ENCODE measurements at regions of chr12 and their contacts with region 1.

Region 1: DNA sequence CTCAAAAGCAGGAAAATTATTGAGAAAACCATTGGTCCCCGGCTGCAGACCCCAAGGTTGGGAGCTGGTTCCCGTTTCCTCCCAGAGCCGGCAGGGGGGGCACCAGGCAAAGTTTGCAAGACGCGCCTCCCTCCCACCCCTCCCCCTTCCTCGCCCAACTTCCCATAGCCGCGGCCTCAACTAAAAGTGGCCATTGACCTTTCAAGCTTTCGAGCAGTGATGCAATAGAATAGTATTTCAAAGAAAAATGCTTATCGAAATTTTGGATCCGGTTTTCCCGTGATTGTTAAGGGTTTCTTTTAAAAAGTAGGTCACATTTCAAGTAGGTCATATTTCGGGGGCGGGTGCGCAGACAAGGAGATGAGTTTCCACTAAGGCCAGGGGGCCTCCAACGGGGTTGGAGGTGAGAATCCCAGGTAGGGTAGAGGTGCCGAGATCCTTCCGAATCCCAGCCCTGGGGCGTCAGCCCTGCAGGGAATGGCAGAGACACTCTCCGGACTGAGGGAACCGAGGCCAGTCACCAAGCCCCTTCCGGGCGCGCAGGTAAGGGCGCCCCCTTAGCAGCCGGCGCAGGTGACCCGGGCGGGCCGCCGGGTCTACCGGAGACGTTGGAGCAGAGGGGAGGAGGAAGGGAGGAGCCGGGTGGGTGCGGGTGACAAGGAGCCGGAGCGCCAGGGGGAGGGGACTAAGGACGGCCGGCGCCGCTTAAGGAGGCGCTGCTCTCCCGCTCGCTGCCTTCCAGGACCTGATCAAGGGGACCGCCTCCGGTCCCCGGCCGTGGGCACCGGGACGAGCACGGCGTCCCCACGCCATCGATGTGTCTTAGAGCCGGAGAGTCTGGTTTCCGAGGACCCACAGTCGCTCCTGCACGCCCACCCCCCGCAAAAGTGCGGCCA is 2.6 kb upstream of the SOCS2 start:
- DNase-seq: no peak
- ATAC-seq: peak; percentile 73
- H3K4me3 ChIP-seq: peak overlapping the region; percentile 81
- H3K27ac ChIP-seq: no peak overlapping the region
- H3K4me1 ChIP-seq: peaks cover 6% of the 10 kb centered on the region; the same call in 1 of the 2 replicates
- H3K27me3 ChIP-seq: peaks cover 11 to 15% of the 10 kb centered on the region in 2 experiments
- CTCF ChIP-seq: peak; percentile 73 to 92 (median 83)
- EP300 ChIP-seq: no peak
- POLR2A ChIP-seq: no peak
- RAD21 ChIP-seq: peak; percentile 89

Region 2: GRCh38 chr12:93624595-93625294 is 54.8 kb after region 1 on chr12:
- CTCF ChIA-PET with region 1: no interaction called
- POLR2A ChIA-PET with region 1: no interaction called
- RAD21 ChIA-PET with region 1: no interaction called
- SMC1A ChIA-PET with region 1: interaction called, 3 read pairs
- in situ Hi-C with region 1: no loop called
- intact Hi-C with region 1: loop called (anchors 2 kb)
- DNase-seq: peak; percentile 63
- ATAC-seq: peak; percentile 90
- H3K4me3 ChIP-seq: no peak overlapping the region
- H3K27ac ChIP-seq: 0 out of 2 replicates have a peak overlapping the region, but pooled peaks have one; percentile 35
- H3K4me1 ChIP-seq: no peaks in the 10 kb centered on the region
- H3K27me3 ChIP-seq: no peaks in the 10 kb centered on the region
- CTCF ChIP-seq: no peak
- EP300 ChIP-seq: peak in 1 of 2 experiments; percentile 75; a peak in 2 of 4 replicates
- POLR2A ChIP-seq: no peak
- RAD21 ChIP-seq: no peak

Region 3: DNA sequence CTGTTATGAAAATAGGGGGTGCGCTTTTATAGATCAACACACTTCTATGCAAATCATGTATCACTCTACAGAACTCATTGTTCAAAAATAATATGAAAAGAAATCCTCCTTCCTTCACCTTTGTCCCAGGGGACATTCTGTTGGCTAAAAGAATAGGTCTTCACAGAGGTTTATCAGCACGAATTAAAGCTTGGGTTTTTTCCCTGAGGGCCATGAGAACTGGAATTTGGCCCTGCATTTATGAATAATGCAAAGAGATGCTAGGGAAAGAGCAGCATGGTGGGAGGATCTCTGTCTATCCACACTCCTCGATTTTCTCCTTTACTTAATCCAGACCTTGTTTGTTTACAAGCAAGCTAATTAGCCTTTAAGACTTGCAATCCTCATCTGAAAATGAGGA is 91.1 kb after region 1 on chr12:
- CTCF ChIA-PET with region 1: no interaction called
- POLR2A ChIA-PET with region 1: no interaction called
- RAD21 ChIA-PET with region 1: no interaction called
- SMC1A ChIA-PET with region 1: no interaction called
- in situ Hi-C with region 1: no loop called
- intact Hi-C with region 1: no loop called
- DNase-seq: no peak
- ATAC-seq: no peak
- H3K4me3 ChIP-seq: no peak overlapping the region
- H3K27ac ChIP-seq: no peak overlapping the region
- H3K4me1 ChIP-seq: no peaks in the 10 kb centered on the region
- H3K27me3 ChIP-seq: no peaks in the 10 kb centered on the region
- CTCF ChIP-seq: no peak
- EP300 ChIP-seq: no peak
- POLR2A ChIP-seq: no peak
- RAD21 ChIP-seq: no peak

Region 4: GRCh38 chr12:93742110-93742934 is 172.4 kb after region 1 on chr12:
- CTCF ChIA-PET with region 1: interaction called, 20 read pairs
- POLR2A ChIA-PET with region 1: no interaction called
- RAD21 ChIA-PET with region 1: interaction called, 16 read pairs
- SMC1A ChIA-PET with region 1: interaction called, 14 read pairs
- in situ Hi-C with region 1: loop called (anchors 5 kb)
- intact Hi-C with region 1: loop called (anchors 1 kb)
- DNase-seq: no peak
- ATAC-seq: peak; percentile 99
- H3K4me3 ChIP-seq: peak overlapping the region; percentile 67
- H3K27ac ChIP-seq: no peak overlapping the region
- H3K4me1 ChIP-seq: no peaks in the 10 kb centered on the region
- H3K27me3 ChIP-seq: no peaks in the 10 kb centered on the region
- CTCF ChIP-seq: peak; percentile 28 to 58 (median 37); a peak in 4 of 6 replicates
- EP300 ChIP-seq: no peak
- POLR2A ChIP-seq: peak; percentile 31; the same call in 1 of the 2 replicates
- RAD21 ChIP-seq: peak; percentile 84

Region 5: DNA sequence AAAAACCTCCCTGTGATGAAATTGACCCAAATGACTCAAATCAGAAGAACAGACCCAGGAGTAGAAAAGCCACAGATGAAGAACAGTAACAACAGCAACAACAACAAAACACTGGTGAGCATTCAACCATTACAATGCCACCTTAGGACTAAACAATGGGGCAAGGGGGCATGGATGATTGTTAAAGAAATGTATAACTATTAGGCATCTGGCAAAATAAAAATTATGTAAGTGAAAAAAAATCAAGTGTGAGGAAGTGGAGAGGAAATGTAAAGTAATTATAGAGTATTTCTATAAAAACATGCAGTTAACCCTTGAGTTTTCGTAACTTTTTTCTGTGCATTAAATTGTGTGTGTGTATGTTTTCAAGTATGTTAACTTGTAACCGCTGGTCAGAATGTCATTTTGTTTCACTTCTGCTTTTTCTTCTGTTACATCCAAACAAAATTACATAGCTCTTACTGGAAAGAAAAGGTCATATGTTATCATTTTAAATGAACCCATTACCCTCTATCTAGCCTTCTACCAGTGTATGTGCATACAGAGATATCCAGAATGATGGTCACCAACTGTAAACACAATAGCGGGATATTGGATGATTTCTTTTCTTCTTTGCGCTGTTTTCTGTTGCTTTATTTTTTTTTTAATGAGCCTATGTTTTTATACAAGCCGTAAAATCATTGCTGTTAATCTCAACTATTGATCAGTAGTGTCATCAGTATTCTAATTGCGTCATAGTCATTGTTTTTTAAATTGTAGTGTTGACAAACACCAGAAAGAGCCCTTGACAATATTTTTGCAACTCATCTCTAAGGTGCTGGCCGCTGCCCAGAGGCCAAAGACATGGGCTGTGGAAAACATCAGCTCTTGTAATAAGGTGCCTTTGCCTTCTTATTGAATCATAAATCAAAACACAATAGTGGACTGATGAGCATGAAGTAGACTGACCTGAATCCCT is 277.9 kb after region 1 on chr12:
- CTCF ChIA-PET with region 1: interaction called, 4 read pairs
- POLR2A ChIA-PET with region 1: no interaction called
- RAD21 ChIA-PET with region 1: interaction called, 3 read pairs
- SMC1A ChIA-PET with region 1: interaction called, 3 read pairs
- in situ Hi-C with region 1: no loop called
- intact Hi-C with region 1: loop called (anchors 5 kb)
- DNase-seq: peak; percentile 82
- ATAC-seq: peak; percentile 93
- H3K4me3 ChIP-seq: no peak overlapping the region
- H3K27ac ChIP-seq: 0 out of 2 replicates have a peak overlapping the region, but pooled peaks have one; percentile 17
- H3K4me1 ChIP-seq: peaks cover 21% of the 10 kb centered on the region
- H3K27me3 ChIP-seq: no peaks in the 10 kb centered on the region
- CTCF ChIP-seq: no peak
- EP300 ChIP-seq: peak; percentile 98
- POLR2A ChIP-seq: no peak
- RAD21 ChIP-seq: peak; percentile 16; the same call in 1 of the 2 replicates

Region 6: GRCh38 chr12:94074980-94075928 is 505.4 kb after region 1 on chr12:
- CTCF ChIA-PET with region 1: interaction called, 15 read pairs
- POLR2A ChIA-PET with region 1: no interaction called
- RAD21 ChIA-PET with region 1: interaction called, 8 read pairs
- SMC1A ChIA-PET with region 1: interaction called, 5 read pairs
- in situ Hi-C with region 1: no loop called
- intact Hi-C with region 1: no loop called
- DNase-seq: no peak
- ATAC-seq: peak; percentile 56; the same call in 2 of the 3 replicates
- H3K4me3 ChIP-seq: no peak overlapping the region
- H3K27ac ChIP-seq: no peak overlapping the region
- H3K4me1 ChIP-seq: no peaks in the 10 kb centered on the region
- H3K27me3 ChIP-seq: no peaks in the 10 kb centered on the region; a peak in 1 of 4 replicates
- CTCF ChIP-seq: peak; percentile 30 to 41 (median 40); a peak in 4 of 6 replicates
- EP300 ChIP-seq: no peak
- POLR2A ChIP-seq: no peak
- RAD21 ChIP-seq: peak; percentile 46

Region 7: GRCh38 chr12:94262228-94263010 is 692.5 kb after region 1 on chr12:
- CTCF ChIA-PET with region 1: no interaction called
- POLR2A ChIA-PET with region 1: no interaction called
- RAD21 ChIA-PET with region 1: no interaction called
- SMC1A ChIA-PET with region 1: no interaction called
- in situ Hi-C with region 1: no loop called
- intact Hi-C with region 1: no loop called
- DNase-seq: no peak
- ATAC-seq: peak; percentile 80
- H3K4me3 ChIP-seq: peak overlapping the region; percentile 35; the same call in 1 of the 2 replicates
- H3K27ac ChIP-seq: peak overlapping the region; percentile 88
- H3K4me1 ChIP-seq: peaks cover 59% of the 10 kb centered on the region
- H3K27me3 ChIP-seq: no peaks in the 10 kb centered on the region
- CTCF ChIP-seq: no peak
- EP300 ChIP-seq: peak in 1 of 2 experiments; percentile 11; a peak in 1 of 4 replicates
- POLR2A ChIP-seq: peak; percentile 76
- RAD21 ChIP-seq: no peak; the same call in 1 of the 2 replicates

Measured in GM12878 (cell line).